ENCODE measurements at regions of chr5 and their contacts with region 1.

Region 1: GRCh38 chr5:36041538-36041846 is 25.2 kb downstream of the UGT3A2 start:
- DNase-seq: no peak
- ATAC-seq: peak in 1 of 2 donors; percentile 58
- H3K4me3 ChIP-seq: no peak overlapping the region
- H3K27ac ChIP-seq: no peak overlapping the region
- H3K4me1 ChIP-seq: peaks cover 0 to 5% of the 10 kb centered on the region in 2 donors
- H3K27me3 ChIP-seq: no peaks in the 10 kb centered on the region
- CTCF ChIP-seq: peak in 4 of 5 experiments; percentile 8 to 30 (median 18)
- POLR2A ChIP-seq: no peak

Region 2: DNA sequence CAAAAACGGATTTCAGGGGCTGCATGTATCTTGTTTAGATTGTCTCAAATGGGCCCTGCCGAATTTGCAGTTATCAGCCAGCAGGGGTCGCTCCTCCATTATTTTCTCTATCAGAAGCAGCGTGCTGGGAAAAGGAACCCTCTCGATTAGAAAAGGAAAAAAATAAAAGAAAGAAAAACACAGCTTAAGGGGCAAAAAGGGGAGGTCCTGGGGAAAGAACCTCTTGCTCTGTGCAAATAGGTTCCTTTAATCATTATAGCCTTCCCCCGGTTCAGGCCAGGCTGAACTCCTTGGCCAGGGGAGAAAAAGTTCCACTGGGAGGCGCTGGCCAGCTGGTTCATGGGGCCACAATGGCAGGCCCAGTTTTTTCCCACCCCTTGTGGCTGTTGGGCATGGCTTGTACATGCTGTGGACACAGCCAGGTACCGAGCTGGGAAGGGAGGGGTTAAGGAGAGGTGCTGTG is 78.1 kb before region 1 on chr5:
- in situ Hi-C with region 1: no loop called
- intact Hi-C with region 1: loop called (anchors 2 kb)
- DNase-seq: no peak
- ATAC-seq: peak; percentile 50 to 70
- H3K4me3 ChIP-seq: no peak overlapping the region
- H3K27ac ChIP-seq: no peak overlapping the region
- H3K4me1 ChIP-seq: peaks cover 0 to 6% of the 10 kb centered on the region in 2 donors
- H3K27me3 ChIP-seq: no peaks in the 10 kb centered on the region
- CTCF ChIP-seq: peak; percentile 40 to 66 (median 60)
- POLR2A ChIP-seq: no peak

Measured in gastrocnemius medialis (tissue), 4 donors.